HEK293T (cell line): ENCODE measurements at regions of chr19 and their contacts with region 1.

Region 1: DNA sequence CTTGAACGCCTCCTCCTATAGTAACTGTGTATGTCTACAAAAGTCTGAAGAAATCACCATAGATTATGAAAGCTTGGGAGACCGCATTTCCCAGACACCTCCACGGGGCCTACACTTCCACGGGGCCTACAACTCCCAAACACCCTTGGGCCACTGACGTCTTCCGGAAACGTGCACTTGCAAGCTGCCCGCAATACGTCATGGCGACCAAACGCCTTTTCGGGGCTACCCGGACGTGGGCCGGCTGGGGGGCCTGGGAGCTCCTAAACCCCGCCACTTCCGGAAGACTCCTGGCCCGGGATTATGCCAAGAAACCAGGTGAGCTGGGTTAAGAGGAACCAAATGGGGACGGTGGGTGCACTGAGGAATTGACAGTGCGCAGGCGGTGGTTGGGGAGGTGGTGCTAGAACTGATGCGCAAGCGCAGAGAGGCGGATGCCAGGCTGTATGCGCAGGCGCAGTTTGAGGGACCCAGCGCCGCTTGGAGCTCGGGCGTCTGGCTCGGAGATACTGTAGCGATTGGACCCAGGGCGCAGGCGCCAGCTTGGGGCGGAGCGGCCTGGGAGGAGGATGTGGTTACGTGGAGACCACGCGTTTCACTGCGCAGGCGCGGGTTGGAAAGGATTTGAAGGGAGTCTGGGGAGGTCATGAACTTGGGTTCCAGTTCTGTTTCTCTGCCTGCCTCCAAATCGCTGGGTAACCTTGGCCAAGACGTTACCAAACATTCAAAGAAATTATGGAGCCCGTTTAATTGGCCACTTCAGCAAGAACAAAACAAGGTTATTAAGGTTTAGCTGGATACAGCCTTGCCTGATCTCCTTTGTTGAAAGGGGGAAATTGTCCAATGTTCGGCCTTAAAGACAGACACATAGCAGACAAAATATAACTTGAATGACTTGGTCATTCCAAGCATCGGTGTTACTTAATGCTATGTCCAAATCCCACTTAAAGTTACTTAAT is at the start of gene MRPL54:
- DNase-seq: peak; percentile 99

Region 2: GRCh38 chr19:3740431-3740830 is 22.3 kb before region 1 on chr19:
- CTCF ChIA-PET with region 1: no interaction called
- POLR2A ChIA-PET with region 1: interaction called, 15 read pairs
- DNase-seq: no peak

Region 3: DNA sequence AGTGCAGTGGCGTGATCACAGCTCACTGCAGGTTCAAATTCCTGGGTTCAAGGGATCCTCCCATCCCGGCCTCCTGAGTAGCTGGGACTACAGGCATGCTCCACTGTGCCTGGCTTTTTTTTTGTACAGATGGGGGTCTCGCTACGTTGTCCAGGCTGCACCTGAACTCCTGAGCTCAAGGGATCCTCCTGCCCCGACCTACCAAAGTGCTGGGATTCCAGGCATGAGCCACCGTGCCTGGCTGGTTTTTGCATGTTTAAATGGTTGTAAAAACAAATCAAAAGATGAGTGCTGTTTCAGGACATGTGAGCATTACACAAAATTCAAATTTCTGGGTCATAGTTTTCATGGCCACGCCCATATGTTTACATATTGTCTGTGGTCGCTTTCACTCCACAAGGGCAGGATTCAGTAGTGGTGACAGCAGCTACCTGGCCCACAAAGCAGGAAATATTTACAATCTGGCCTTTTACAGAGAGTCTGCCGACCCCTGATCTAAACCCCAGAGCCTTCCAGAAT is 18.1 kb after region 1 on chr19:
- CTCF ChIA-PET with region 1: no interaction called
- POLR2A ChIA-PET with region 1: interaction called, 14 read pairs
- DNase-seq: no peak

Region 4: DNA sequence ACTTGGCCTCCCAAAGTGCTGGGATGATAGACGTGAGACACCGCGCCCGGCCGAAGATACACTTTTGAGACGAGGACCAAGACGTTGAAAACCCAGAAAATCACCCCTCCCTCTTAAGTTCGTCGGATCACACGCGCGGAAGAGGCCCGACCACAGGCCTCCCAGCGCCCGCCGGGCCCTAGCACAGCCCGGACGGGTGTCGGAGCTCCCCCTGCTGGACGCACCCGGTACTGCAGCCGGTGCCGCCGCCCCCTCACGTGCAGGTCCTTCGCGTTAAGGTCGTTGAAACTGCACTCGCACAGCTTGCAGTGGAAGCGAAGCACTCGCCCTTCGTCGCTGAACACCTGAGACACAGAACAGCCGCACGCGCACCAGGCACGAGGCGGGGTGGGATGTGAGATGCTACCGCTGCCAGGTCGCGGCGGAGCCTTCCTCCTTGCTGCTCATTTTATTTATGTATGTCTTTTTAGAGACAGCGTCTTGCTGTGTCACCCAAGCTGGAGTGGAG is 59.1 kb after region 1 on chr19:
- CTCF ChIA-PET with region 1: interaction called, 7 read pairs
- POLR2A ChIA-PET with region 1: interaction called, 13 read pairs
- DNase-seq: peak; percentile 93

Region 5: GRCh38 chr19:3984908-3985642 is 222.3 kb after region 1 on chr19 and contains the start of gene EEF2:
- CTCF ChIA-PET with region 1: interaction called, 4 read pairs
- POLR2A ChIA-PET with region 1: interaction called, 13 read pairs
- DNase-seq: peak; percentile 93